ENCODE measurements at regions of chr9 and their contacts with region 1.

Region 1: GRCh38 chr9:87678650-87679515 is 47.0 kb upstream of the CTSL start:
- DNase-seq: peak in 11 of 14 experiments; percentile 10 to 70 (median 37)
- ATAC-seq: no peak
- H3K4me3 ChIP-seq: no peak overlapping the region
- H3K4me3 Mint-ChIP-seq: no peak overlapping the region
- H3K27ac ChIP-seq: no peak overlapping the region
- H3K27ac Mint-ChIP-seq: no peak overlapping the region
- H3K4me1 ChIP-seq: peaks cover 7% of the 10 kb centered on the region
- H3K4me1 Mint-ChIP-seq: peaks cover 13% of the 10 kb centered on the region
- H3K27me3 ChIP-seq: no peaks in the 10 kb centered on the region
- H3K27me3 Mint-ChIP-seq: no peaks in the 10 kb centered on the region
- CTCF ChIP-seq: peak; percentile 88

Region 2: DNA sequence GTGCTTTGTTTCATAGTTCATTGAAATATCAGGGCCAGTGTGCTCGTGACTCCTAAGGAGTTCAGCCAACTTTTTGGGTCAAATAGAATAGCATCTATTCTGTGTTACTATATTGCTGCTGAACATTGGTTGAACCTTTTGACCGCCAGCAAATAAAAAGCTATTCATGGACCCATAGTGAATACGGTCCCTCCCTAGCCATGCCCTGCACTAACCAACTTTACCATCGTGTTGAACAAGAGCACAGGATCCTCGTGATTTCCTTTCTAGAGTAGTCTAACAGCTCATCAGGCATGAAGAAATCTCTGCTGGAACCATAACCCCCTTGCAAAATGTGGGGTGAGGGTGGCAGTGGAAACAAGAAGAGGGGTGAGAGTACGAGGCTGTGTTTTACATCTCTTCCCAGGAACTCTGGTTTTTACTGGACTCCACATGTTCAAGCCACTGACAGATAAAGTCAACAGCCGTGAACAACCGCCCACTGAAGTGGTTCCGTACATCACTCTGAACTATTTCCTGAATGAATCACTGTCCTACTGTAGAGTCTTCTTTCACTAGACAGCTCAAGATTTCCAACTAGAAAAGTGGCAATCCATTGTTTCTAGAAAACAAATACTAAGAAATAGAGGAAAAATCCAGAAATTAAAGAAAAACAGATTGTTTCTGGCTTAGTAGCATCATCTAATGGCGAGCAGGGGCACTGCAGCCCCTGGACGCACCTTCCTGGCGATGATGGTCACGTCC is 133.7 kb after region 1 on chr9:
- CTCF ChIA-PET with region 1: no interaction called
- POLR2A ChIA-PET with region 1: no interaction called
- intact Hi-C with region 1: loop called (anchors 2 kb)
- DNase-seq: peak in 3 of 14 experiments; percentile 7 to 27 (median 21)
- ATAC-seq: peak; percentile 37
- H3K4me3 ChIP-seq: peak overlapping the region; percentile 10
- H3K4me3 Mint-ChIP-seq: peak overlapping the region; percentile 62
- H3K27ac ChIP-seq: no peak overlapping the region
- H3K27ac Mint-ChIP-seq: no peak overlapping the region
- H3K4me1 ChIP-seq: peaks cover 5% of the 10 kb centered on the region
- H3K4me1 Mint-ChIP-seq: peaks cover 18% of the 10 kb centered on the region
- H3K27me3 ChIP-seq: peaks cover 0 to 2% of the 10 kb centered on the region in 2 experiments
- H3K27me3 Mint-ChIP-seq: no peaks in the 10 kb centered on the region
- CTCF ChIP-seq: peak; percentile 61

Region 3: DNA sequence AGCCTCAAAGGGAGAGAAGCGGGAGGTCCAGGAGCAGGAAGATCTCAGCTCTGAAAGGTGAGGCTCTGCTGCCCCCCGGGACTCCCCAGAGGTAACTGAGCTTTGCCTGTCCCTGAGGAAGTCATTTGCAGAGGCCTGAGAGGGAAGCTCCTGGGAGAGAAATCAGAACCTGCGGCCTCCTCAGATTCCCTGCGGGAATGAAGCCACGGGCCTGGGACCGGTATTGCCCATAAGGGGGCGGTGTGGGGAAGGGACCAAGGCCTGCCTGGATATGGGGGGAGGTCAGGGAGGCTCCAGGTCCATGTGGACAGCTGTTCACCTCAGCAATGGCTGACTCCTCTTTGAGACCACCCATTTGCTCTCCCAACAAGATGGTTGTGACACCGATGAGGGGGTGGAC is 205.1 kb after region 1 on chr9:
- CTCF ChIA-PET with region 1: no interaction called
- POLR2A ChIA-PET with region 1: no interaction called
- intact Hi-C with region 1: loop called in 1 of 2 experiments (anchors 5 kb)
- DNase-seq: no peak
- ATAC-seq: no peak
- H3K4me3 ChIP-seq: no peak overlapping the region
- H3K4me3 Mint-ChIP-seq: no peak overlapping the region
- H3K27ac ChIP-seq: no peak overlapping the region
- H3K27ac Mint-ChIP-seq: no peak overlapping the region
- H3K4me1 ChIP-seq: no peaks in the 10 kb centered on the region
- H3K4me1 Mint-ChIP-seq: no peaks in the 10 kb centered on the region
- H3K27me3 ChIP-seq: no peaks in the 10 kb centered on the region
- H3K27me3 Mint-ChIP-seq: no peaks in the 10 kb centered on the region
- CTCF ChIP-seq: no peak

Region 4: DNA sequence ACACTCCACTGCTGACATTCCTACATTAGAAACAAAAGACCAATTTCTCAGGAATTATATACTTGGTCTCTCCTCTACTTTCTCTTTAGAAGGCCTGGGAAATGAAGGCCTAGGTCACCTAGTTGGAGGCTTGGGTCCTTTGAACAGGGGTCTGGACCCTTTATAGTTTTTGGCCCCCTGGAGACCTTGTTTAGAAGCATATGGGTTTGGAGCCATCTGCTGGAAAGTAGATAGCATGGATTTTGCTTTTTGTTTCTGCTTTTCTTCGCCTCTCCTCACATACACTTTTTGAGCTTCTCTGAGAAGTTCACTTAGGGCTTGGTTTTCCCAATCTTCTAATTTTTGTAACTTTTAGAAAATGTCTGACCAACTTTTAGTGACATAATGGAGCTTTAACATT is 362.6 kb after region 1 on chr9:
- CTCF ChIA-PET with region 1: no interaction called
- POLR2A ChIA-PET with region 1: no interaction called
- intact Hi-C with region 1: loop called in 1 of 2 experiments (anchors 10 kb)
- DNase-seq: no peak
- ATAC-seq: no peak
- H3K4me3 ChIP-seq: no peak overlapping the region
- H3K4me3 Mint-ChIP-seq: no peak overlapping the region
- H3K27ac ChIP-seq: no peak overlapping the region
- H3K27ac Mint-ChIP-seq: no peak overlapping the region
- H3K4me1 ChIP-seq: no peaks in the 10 kb centered on the region
- H3K4me1 Mint-ChIP-seq: no peaks in the 10 kb centered on the region
- H3K27me3 ChIP-seq: no peaks in the 10 kb centered on the region
- H3K27me3 Mint-ChIP-seq: peaks cover 5% of the 10 kb centered on the region
- CTCF ChIP-seq: no peak

Measured in CD4-positive, alpha-beta T cell (primary cell).